Left lung (tissue), 14 donors: ENCODE measurements at regions of chr16 and their contacts with region 1.

Region 1: DNA sequence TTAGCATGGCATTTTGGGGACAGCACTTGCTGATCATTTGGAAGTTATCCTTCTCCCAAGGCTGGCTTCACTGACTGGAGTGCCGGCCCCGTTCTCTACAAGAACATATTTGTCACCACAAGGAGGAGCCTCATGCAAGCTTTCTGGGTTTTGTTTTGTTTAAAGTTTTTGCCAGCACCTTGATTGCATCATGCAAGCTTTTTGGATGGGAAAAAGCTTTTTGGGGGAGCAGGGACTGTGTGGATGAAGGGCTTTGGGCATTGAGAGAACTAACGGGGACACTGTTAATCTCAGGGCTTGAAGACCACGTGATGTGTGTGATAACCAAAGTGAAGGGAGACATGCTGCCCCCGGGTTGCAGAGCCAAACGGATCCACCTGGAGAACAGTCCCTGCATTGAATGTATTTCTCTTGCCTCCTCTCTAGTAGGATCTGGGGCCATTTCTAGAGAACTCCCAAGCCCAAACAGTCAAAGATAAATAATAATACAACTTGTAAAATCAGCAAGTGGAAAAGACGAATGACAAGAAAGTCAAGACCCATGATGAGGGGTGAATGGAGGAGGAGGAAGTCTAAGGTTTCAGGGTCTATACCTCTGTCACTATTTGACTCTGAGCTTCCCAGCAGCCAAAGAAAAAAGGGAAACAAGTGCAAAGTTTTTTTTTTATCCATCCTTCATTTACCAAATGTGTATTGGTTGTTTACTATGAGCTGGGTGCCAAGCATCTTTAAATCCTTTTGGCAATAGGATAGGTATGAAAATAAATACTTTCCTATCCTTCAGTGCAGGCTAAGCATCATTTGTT is 17.2 kb downstream of the TMEM114 start:
- DNase-seq: no peak
- ATAC-seq: peak; percentile 19
- H3K4me3 ChIP-seq: no peak overlapping the region
- H3K27ac ChIP-seq: no peak overlapping the region
- H3K4me1 ChIP-seq: no peaks in the 10 kb centered on the region
- H3K27me3 ChIP-seq: peaks cover 5 to 89% of the 10 kb centered on the region in 2 donors
- CTCF ChIP-seq: peak; percentile 14 to 35

Region 2: GRCh38 chr16:8458481-8459046 is 114.6 kb before region 1 on chr16:
- intact Hi-C with region 1: no loop called
- DNase-seq: no peak
- ATAC-seq: no peak
- H3K4me3 ChIP-seq: no peak overlapping the region
- H3K27ac ChIP-seq: no peak overlapping the region
- H3K4me1 ChIP-seq: no peaks in the 10 kb centered on the region
- H3K27me3 ChIP-seq: no peaks in the 10 kb centered on the region
- CTCF ChIP-seq: no peak

Region 3: GRCh38 chr16:8634991-8635736 is 62.0 kb after region 1 on chr16:
- intact Hi-C with region 1: loop called in 1 of 2 experiments (anchors 10 kb)
- DNase-seq: no peak
- ATAC-seq: no peak
- H3K4me3 ChIP-seq: no peak overlapping the region
- H3K27ac ChIP-seq: no peak overlapping the region
- H3K4me1 ChIP-seq: peaks cover 0 to 26% of the 10 kb centered on the region in 2 donors
- H3K27me3 ChIP-seq: no peaks in the 10 kb centered on the region
- CTCF ChIP-seq: no peak

Region 4: DNA sequence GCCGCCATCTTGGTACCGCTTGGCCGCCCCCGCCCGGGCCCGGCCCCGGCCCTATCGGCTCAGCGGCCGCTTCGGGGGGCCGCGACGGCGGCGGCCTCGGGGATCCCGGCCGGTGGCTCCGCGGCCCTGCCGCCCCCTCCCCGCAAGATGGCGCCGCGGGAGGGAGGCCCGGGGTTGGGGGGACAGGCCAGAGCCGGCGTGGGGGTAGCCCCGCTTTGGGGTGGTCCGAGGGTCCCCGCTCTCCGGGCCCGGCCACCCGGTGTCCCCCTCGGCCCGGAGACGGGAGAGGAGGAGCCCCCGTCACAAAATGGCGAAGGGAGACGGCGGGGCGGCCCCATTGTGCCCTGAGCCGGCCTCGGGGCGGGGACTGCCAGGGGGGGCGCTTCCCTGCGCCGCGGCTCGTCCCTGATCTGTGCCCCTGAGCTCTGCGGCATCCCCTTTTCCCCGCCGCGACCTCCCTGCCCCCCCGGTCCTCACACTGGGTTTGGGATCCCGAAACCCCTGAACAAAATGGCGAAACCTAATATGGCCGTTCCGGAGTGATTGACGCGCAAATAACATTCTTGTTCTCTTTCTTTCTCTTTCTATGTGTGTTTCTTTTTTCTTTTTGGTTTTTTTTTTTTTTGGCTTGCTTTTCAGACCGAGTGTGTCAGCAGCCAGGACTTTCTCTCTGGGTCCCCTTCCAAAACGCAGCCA is 519.3 kb after region 1 on chr16:
- intact Hi-C with region 1: no loop called
- DNase-seq: peak; percentile 43 to 90 (median 47)
- ATAC-seq: peak; percentile 8
- H3K4me3 ChIP-seq: peak overlapping the region; percentile 77 to 93
- H3K27ac ChIP-seq: peak overlapping the region; percentile 98 to 99
- H3K4me1 ChIP-seq: peaks cover 29 to 51% of the 10 kb centered on the region in 2 donors
- H3K27me3 ChIP-seq: no peaks in the 10 kb centered on the region
- CTCF ChIP-seq: no peak